H1 (cell line): ENCODE measurements at regions of chr4 and their contacts with region 1.

Region 1: DNA sequence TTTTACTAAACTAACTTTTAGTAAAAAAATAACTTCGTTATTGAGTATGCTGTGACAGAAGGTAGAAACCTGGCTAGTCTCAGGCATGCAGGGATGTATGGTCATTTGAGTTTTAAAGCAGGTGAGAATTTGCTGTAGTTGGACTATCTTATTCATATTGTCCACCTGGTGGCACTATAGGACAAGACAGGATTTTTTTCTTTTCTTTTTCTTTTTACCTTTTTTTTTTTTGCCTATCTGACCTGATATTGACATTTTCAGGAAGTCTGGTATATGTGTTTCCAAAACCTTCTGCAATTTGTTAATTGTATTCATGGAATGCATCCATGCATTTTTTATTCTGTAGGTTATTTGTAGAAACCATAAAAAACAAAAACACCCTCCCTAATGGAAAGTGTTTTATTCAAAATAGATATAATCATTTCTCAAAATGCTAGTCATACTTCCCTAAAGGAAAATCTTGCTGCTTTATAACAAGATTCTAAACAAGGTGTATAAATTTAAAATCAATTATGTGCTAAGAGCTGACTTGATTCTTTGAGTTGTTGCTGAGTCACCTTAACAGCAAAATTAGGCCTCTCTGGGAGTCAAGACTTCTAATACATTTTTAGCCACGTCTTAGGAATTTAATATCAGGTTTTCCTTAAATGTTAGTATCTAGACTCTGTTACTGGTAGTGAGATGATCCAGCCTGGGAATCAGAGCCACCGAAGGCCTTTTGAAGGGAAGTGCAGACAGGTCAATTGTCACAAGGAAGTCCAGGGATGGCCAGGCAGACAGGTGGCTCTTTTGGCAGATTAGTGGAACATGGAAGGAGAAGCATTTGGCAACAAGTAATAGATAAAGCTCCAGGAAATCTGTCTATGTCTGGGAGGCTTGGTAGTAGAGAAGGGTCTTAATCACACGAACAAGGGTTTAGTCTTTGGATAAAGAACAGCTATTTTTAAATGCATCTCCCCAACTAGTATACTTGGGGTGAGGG is 201.3 kb upstream of the GNPDA2 start:
- DNase-seq: no peak
- H3K4me3 ChIP-seq: no peak overlapping the region
- H3K27ac ChIP-seq: no peak overlapping the region
- H3K4me1 ChIP-seq: no peaks in the 10 kb centered on the region
- H3K27me3 ChIP-seq: no peaks in the 10 kb centered on the region
- CTCF ChIP-seq: peak in 2 of 3 experiments; percentile 29 to 37; a peak in 2 of 4 replicates
- EP300 ChIP-seq: no peak
- POLR2A ChIP-seq: no peak
- RAD21 ChIP-seq: peak; percentile 78 to 83

Region 2: DNA sequence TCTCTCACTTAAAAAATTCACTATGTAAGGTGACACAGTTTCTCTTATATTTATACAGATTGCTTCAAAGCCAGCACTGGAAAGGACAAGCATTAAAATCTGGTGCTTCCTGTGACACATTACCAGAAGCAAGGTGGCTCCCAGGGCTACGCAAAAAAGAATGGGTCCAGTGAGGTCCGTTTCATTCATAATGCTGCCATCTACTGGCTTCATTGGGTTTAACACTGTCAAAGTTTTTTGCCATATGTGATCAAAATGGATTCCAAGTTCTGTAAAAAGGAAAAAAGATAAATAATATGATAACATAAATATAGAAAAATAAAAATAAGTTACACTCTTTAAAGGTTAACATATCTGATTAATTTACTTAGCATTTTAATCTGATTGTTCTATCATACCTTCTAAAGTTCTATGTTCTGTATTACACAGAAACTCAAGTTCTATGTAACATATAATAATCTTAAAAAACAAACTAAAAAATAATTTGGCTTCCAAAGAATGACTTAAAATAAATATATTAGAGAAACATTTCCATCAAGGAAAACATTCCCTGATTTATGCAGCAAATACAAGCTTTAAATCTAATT is 298.3 kb before region 1 on chr4:
- CTCF ChIA-PET with region 1: no interaction called
- POLR2A ChIA-PET with region 1: no interaction called
- DNase-seq: peak; percentile 9 to 49
- H3K4me3 ChIP-seq: no peak overlapping the region
- H3K27ac ChIP-seq: no peak overlapping the region
- H3K4me1 ChIP-seq: no peaks in the 10 kb centered on the region
- H3K27me3 ChIP-seq: no peaks in the 10 kb centered on the region
- CTCF ChIP-seq: peak in 2 of 3 experiments; percentile 54 to 68; a peak in 3 of 4 replicates
- EP300 ChIP-seq: no peak
- POLR2A ChIP-seq: no peak
- RAD21 ChIP-seq: peak; percentile 80

Region 3: GRCh38 chr4:44848466-44848865 is 79.2 kb before region 1 on chr4:
- CTCF ChIA-PET with region 1: no interaction called
- POLR2A ChIA-PET with region 1: no interaction called
- DNase-seq: no peak
- H3K4me3 ChIP-seq: no peak overlapping the region
- H3K27ac ChIP-seq: no peak overlapping the region
- H3K4me1 ChIP-seq: no peaks in the 10 kb centered on the region
- H3K27me3 ChIP-seq: no peaks in the 10 kb centered on the region
- CTCF ChIP-seq: no peak
- EP300 ChIP-seq: no peak
- POLR2A ChIP-seq: no peak
- RAD21 ChIP-seq: no peak

Region 4: DNA sequence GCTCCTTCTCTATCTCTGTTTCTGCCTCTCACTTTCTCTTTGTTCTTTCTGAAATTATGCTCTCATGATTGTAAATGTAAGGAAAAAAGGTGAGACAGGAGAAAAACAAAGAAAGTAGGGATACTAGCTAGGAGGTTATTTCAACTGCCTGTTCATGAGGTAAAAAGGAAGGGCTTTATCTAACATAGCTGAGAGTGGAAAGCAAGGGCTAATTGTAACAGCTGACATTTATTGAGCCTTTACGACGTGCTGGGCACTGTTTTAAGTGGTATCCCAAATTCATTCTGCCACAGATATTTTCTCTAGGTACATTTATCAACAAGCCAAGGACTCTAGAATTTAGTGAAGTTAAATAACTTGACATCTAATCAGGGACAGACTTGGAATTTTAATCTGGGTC is 68.2 kb before region 1 on chr4:
- CTCF ChIA-PET with region 1: no interaction called
- POLR2A ChIA-PET with region 1: no interaction called
- DNase-seq: no peak
- H3K4me3 ChIP-seq: no peak overlapping the region
- H3K27ac ChIP-seq: no peak overlapping the region
- H3K4me1 ChIP-seq: peaks cover 6 to 18% (median 8%) of the 10 kb centered on the region in 4 experiments; a peak in 6 of 7 replicates
- H3K27me3 ChIP-seq: peaks cover 0 to 1% (median 0%) of the 10 kb centered on the region in 4 experiments; a peak in 1 of 7 replicates
- CTCF ChIP-seq: no peak
- EP300 ChIP-seq: no peak
- POLR2A ChIP-seq: no peak
- RAD21 ChIP-seq: no peak

Region 5: DNA sequence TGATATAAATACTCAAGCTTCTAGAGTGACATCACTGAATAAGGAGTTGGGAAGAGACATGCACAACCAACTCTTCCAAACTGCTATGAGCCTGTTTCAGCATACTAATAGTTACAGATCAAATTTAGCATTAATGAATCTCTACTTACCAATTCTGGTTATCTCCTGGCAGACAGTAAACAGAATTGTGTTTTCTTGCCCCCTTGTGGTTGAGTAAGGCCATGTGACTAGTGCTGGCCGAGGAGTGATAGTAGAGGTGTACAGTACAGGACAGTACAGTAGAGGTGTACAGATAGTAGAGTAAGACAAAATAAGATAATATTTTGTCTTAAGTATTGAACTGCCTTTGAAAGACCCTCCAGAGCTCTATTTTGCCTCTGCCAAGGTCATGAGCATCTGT is 514.8 kb after region 1 on chr4:
- CTCF ChIA-PET with region 1: interaction called, 16 read pairs
- POLR2A ChIA-PET with region 1: no interaction called
- DNase-seq: no peak
- H3K4me3 ChIP-seq: no peak overlapping the region
- H3K27ac ChIP-seq: no peak overlapping the region
- H3K4me1 ChIP-seq: no peaks in the 10 kb centered on the region
- H3K27me3 ChIP-seq: no peaks in the 10 kb centered on the region
- CTCF ChIP-seq: peak in 2 of 3 experiments; percentile 16 to 28; a peak in 2 of 4 replicates
- EP300 ChIP-seq: no peak
- POLR2A ChIP-seq: no peak
- RAD21 ChIP-seq: peak; percentile 54 to 56